ENCODE measurements at regions of chr1 and their contacts with region 1.

Region 1: DNA sequence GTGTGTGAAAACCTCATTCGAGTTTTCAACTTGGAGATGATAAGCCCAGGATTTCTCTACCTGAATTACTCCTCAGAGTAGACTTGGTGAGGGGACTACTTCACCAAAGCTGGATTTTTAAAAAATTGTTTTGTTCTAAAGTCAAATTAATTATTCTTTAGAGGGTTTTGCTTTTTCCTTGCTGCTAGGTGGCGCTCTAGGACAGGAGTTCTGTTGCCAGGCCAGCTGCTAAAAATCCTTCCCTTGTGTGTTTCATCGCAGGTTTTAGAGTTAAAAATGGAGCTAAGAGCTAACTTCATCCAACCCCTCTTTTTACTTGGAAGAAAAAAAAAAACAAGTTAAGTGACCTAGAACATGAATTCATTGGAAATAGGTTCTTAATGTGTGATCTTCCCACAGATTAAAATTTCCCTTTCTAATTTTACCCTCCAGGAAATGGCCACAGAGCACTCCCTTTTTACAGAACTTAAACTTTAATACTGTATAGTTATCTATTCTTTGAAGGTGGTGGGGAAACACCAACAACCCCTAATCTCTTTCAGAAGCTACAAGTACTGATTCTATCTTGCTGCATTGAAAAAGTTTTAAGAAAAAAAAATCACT is 36.7 kb upstream of the FAM163A start:
- DNase-seq: no peak
- H3K4me3 ChIP-seq: no peak overlapping the region
- CTCF ChIP-seq: peak; percentile 56

Region 2: DNA sequence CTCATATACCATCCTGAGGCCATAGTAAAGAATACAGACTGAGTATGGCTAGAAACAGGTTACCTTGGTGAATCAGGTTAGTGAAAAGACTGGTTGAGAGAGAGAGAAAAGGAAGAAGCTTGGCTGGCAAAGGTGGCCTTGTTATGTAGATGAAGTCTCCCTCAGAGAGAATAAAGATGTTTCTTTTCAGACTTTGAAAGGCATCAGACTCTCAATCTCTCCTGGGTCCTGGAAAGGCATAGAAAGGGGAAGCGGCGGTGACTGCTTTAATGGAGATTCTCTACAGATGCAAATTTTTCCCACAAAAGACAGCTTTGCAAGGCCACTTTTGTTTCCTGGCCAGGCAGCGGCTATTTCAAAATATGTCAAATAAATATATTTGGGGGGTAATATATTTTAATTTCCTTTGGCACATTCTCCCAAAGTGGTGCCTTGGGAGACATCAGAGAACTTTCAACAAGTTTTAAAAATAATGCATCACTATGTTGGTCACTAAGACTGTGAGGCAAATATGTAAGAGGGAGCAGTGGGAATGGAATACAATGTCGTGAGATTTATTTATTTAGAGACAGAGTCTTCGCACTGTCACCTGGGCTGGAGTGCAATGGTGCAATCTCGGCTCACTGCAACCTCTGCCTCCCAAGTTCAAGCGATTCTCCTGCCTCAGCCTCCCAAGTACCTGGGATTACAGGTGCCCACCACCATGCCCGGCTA is 176.8 kb before region 1 on chr1:
- CTCF ChIA-PET with region 1: no interaction called
- POLR2A ChIA-PET with region 1: no interaction called
- DNase-seq: no peak
- H3K4me3 ChIP-seq: no peak overlapping the region
- CTCF ChIP-seq: no peak

Region 3: GRCh38 chr1:179719272-179719671 is 12.8 kb after region 1 on chr1:
- CTCF ChIA-PET with region 1: interaction called, 12 read pairs
- POLR2A ChIA-PET with region 1: no interaction called
- DNase-seq: no peak
- H3K4me3 ChIP-seq: no peak overlapping the region
- CTCF ChIP-seq: no peak

Region 4: DNA sequence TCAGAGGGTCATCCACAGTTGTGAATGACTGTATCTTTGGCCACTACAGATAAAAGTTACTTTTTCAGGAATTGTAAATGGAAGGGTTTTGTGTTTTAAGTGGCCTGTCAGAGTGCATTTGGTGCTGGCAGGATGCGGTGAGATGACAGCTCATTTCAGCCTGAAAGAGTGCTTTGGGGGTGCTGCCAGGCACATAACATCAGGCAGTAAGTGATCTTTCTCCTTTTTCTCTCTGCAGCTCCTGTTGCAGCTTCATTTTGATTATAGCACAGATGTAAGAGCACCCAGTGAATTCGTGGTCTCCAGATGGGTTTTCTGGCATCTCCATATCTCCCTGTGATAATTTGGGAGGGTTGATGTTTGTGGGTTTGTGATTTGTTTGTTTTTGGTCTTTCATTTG is 21.8 kb after region 1 on chr1:
- CTCF ChIA-PET with region 1: interaction called, 13 read pairs
- POLR2A ChIA-PET with region 1: no interaction called
- DNase-seq: no peak
- H3K4me3 ChIP-seq: no peak overlapping the region
- CTCF ChIP-seq: no peak

Region 5: GRCh38 chr1:179824265-179824664 is 117.8 kb after region 1 on chr1:
- CTCF ChIA-PET with region 1: interaction called, 869 read pairs
- POLR2A ChIA-PET with region 1: no interaction called
- DNase-seq: no peak
- H3K4me3 ChIP-seq: no peak overlapping the region
- CTCF ChIP-seq: no peak

Measured in AG04449 (cell line).